ENCODE measurements at regions of chr11 and their contacts with region 1.

Region 1: DNA sequence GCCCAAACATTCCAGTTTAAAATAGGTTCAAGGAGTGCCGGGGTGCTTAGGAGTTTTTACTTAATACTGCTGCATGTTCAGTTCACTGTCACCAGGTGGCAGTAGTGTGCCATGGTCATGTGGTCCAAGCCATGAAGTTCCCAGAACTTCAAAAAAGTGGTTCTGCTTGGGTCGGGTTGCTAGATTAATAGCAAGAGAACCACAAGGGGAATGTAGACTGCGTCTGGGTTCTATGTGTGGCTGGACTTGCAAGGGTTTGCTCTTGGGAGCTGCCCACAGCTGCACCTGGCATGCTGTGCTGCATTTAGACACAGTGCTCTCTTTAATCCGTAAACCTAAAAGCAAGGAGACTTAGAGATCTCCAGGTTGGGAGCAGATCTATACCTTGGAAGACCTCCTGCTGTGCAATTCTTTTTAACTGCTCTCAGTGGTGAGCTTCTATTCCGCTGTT is 6.5 kb upstream of the SPON1 start:
- DNase-seq: peak in 8 of 9 experiments; percentile 39 to 86 (median 66)
- ATAC-seq: peak; percentile 92
- H3K4me3 ChIP-seq: no peak overlapping the region
- H3K4me3 Mint-ChIP-seq: no peak overlapping the region
- H3K27ac ChIP-seq: no peak overlapping the region
- H3K27ac Mint-ChIP-seq: no peak overlapping the region
- H3K4me1 ChIP-seq: peaks cover 6% of the 10 kb centered on the region
- H3K4me1 Mint-ChIP-seq: no peaks in the 10 kb centered on the region
- H3K27me3 ChIP-seq: peaks cover 0 to 3% of the 10 kb centered on the region in 2 experiments
- H3K27me3 Mint-ChIP-seq: peaks cover 9% of the 10 kb centered on the region
- CTCF ChIP-seq: peak; percentile 97

Region 2: GRCh38 chr11:13923716-13924650 is 32.0 kb before region 1 on chr11:
- CTCF ChIA-PET with region 1: interaction called, 12 read pairs
- POLR2A ChIA-PET with region 1: no interaction called
- intact Hi-C with region 1: no loop called
- DNase-seq: peak in 8 of 9 experiments; percentile 19 to 66 (median 30)
- ATAC-seq: peak; percentile 93
- H3K4me3 ChIP-seq: peak overlapping the region; percentile 12
- H3K4me3 Mint-ChIP-seq: peak overlapping the region; percentile 70
- H3K27ac ChIP-seq: peak overlapping the region; percentile 32 to 86
- H3K27ac Mint-ChIP-seq: peak overlapping the region; percentile 96
- H3K4me1 ChIP-seq: peaks cover 49% of the 10 kb centered on the region
- H3K4me1 Mint-ChIP-seq: peaks cover 62% of the 10 kb centered on the region
- H3K27me3 ChIP-seq: no peaks in the 10 kb centered on the region
- H3K27me3 Mint-ChIP-seq: no peaks in the 10 kb centered on the region
- CTCF ChIP-seq: no peak

Region 3: DNA sequence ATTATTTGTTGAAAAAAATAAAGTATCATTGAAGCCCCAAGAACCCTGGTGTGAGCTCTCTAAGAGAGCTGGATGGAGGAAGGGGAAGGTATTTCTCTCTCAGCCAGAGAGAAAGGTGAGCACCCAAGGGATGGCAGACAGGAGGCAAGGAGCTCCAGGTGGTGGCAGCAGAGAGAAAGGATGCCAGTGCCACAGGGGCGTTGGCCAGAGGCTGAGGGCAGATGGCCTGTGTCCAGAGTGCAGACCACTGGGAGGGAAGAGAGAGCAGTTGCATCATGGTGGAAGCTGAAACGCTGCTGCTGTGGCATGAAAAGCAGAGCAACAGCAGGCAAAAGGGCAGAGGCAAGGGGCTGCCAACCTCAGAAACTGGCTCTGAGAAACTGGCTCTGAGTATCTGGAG is 15.0 kb after region 1 on chr11:
- CTCF ChIA-PET with region 1: interaction called, 10 read pairs
- POLR2A ChIA-PET with region 1: no interaction called
- intact Hi-C with region 1: no loop called
- DNase-seq: peak in 2 of 9 experiments; percentile 27 to 33
- ATAC-seq: no peak
- H3K4me3 ChIP-seq: no peak overlapping the region
- H3K4me3 Mint-ChIP-seq: no peak overlapping the region
- H3K27ac ChIP-seq: no peak overlapping the region
- H3K27ac Mint-ChIP-seq: no peak overlapping the region
- H3K4me1 ChIP-seq: no peaks in the 10 kb centered on the region
- H3K4me1 Mint-ChIP-seq: no peaks in the 10 kb centered on the region
- H3K27me3 ChIP-seq: peaks cover 0 to 1% of the 10 kb centered on the region in 2 experiments
- H3K27me3 Mint-ChIP-seq: peaks cover 16% of the 10 kb centered on the region
- CTCF ChIP-seq: no peak

Region 4: GRCh38 chr11:14036469-14036868 is 80.5 kb after region 1 on chr11:
- CTCF ChIA-PET with region 1: no interaction called
- POLR2A ChIA-PET with region 1: no interaction called
- intact Hi-C with region 1: no loop called
- DNase-seq: no peak
- ATAC-seq: no peak
- H3K4me3 ChIP-seq: no peak overlapping the region
- H3K4me3 Mint-ChIP-seq: no peak overlapping the region
- H3K27ac ChIP-seq: no peak overlapping the region
- H3K27ac Mint-ChIP-seq: no peak overlapping the region
- H3K4me1 ChIP-seq: no peaks in the 10 kb centered on the region
- H3K4me1 Mint-ChIP-seq: peaks cover 1% of the 10 kb centered on the region
- H3K27me3 ChIP-seq: no peaks in the 10 kb centered on the region
- H3K27me3 Mint-ChIP-seq: no peaks in the 10 kb centered on the region
- CTCF ChIP-seq: no peak

Region 5: GRCh38 chr11:14249121-14249963 is 293.3 kb after region 1 on chr11:
- CTCF ChIA-PET with region 1: interaction called, 25 read pairs
- POLR2A ChIA-PET with region 1: no interaction called
- intact Hi-C with region 1: loop called (anchors 1 kb)
- DNase-seq: peak; percentile 37 to 85 (median 73)
- ATAC-seq: peak; percentile 61
- H3K4me3 ChIP-seq: no peak overlapping the region
- H3K4me3 Mint-ChIP-seq: peak overlapping the region; percentile 61
- H3K27ac ChIP-seq: no peak overlapping the region
- H3K27ac Mint-ChIP-seq: no peak overlapping the region
- H3K4me1 ChIP-seq: peaks cover 16% of the 10 kb centered on the region
- H3K4me1 Mint-ChIP-seq: peaks cover 22% of the 10 kb centered on the region
- H3K27me3 ChIP-seq: no peaks in the 10 kb centered on the region
- H3K27me3 Mint-ChIP-seq: no peaks in the 10 kb centered on the region
- CTCF ChIP-seq: peak; percentile 98